A549 (cell line): ENCODE measurements at regions of chr6 and their contacts with region 1.

Region 1: GRCh38 chr6:2353412-2354137 is 108.2 kb upstream of the GMDS start:
- DNase-seq: peak; percentile 33 to 63
- ATAC-seq: peak; percentile 59 to 68; a peak in 3 of 6 replicates
- H3K4me3 ChIP-seq: no peak overlapping the region
- H3K27ac ChIP-seq: no peak overlapping the region
- H3K4me1 ChIP-seq: no peaks in the 10 kb centered on the region
- CTCF ChIP-seq: peak; percentile 73
- EP300 ChIP-seq: no peak
- POLR2A ChIP-seq: no peak
- RAD21 ChIP-seq: peak; percentile 80 to 83

Region 2: DNA sequence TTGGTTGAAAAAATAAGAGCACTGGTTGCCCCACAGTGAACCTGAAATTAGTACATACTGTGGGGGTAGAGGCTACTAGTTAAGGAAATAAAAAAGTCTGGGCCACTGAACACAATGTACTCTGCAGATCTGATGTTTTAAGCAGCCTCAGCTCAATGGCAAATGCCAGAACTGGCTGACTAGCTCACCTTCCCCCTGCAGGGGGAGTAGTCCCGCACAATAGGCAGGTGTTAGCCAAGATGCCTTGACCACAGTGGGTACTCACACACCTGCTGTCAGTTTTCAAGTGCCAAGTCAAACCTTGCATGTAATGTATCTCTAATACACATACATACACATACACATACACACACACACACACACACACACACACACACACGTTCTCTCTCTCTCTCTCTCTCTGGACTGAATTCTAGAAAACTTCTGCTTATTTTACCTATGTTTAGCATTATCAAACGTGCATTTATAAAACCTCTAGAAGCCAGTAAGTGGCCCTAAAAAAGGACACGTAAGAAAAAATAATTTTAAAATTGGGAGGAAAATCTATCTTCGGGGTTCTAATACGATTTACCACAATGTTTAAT is 144.3 kb before region 1 on chr6:
- CTCF ChIA-PET with region 1: interaction called, 13 read pairs
- POLR2A ChIA-PET with region 1: no interaction called
- DNase-seq: peak in 1 of 2 experiments; percentile 54
- ATAC-seq: peak; percentile 84 to 89
- H3K4me3 ChIP-seq: no peak overlapping the region
- H3K27ac ChIP-seq: no peak overlapping the region
- H3K4me1 ChIP-seq: no peaks in the 10 kb centered on the region
- CTCF ChIP-seq: peak; percentile 43
- EP300 ChIP-seq: no peak
- POLR2A ChIP-seq: no peak
- RAD21 ChIP-seq: peak; percentile 43 to 55; a peak in 4 of 5 replicates